Calu3 (cell line): ENCODE measurements at regions of chr10 and their contacts with region 1.

Region 1: DNA sequence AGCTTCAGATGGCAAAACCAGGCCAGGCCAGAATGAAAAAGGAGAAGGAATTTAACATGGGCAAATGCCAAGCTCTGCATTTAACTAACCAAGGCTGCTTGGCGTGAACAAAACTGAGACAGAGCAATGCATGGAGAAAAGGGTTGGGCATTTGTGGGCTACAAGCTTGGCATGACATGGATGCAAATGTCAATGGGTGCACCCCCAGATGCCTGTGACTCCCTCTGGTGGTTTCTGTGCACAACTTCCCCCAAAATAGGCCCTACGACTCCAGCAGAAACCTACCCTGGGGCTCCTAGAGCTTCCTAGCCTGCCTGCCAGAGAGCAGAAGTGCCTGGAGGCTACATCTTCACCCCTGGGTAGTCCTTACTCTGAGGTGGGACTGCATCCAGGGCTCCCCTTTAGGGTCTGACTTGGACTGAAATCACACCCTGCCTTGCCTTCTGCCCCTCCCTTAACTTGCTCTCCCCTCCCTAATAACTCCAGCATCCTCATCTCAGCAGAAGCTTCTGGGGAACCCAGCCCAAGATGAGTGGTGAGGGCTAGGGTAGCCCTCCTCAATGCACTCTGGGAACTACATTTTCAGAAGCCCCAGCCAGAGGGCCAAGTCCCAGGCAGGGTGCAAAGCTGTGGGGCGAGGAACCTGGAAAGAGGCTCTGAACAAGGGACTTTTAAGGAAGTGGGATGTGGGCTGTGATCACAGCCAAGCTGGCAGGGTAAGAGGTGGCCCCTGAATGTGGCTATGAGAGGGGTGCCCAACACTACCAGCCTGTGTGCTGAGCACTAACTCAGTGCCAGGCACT is 11.3 kb downstream of the GPRIN2 start:
- DNase-seq: peak; percentile 70
- H3K4me3 Mint-ChIP-seq: no peak overlapping the region
- H3K27ac Mint-ChIP-seq: no peak overlapping the region
- H3K4me1 Mint-ChIP-seq: peaks cover 37% of the 10 kb centered on the region
- H3K27me3 Mint-ChIP-seq: no peaks in the 10 kb centered on the region
- CTCF ChIP-seq: peak; percentile 89

Region 2: DNA sequence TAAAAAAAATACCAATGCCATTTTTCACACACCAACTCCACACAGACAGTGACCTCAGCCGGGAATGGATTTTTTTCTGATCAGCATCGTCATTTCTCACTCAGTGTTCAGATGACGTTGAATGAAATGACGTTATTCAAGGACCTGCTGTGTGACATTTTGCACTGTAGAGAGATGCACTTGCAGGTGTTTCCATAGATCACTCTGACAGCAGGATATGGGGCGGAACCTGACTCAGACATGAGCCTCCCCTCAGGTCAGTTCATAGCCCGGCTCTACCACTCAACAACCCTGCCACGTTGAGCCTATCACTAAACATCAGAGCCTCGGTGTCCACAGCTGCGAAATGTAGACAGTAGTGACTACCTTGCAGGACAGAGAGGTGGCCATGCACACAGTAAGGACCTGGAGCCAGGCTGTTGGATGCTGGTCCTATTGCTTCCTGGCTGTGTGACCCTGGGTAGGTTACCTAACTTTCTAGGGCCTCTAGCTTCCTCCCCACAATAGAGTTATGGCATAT is 299.7 kb before region 1 on chr10:
- CTCF ChIA-PET with region 1: no interaction called
- intact Hi-C with region 1: no loop called
- DNase-seq: no peak
- H3K4me3 Mint-ChIP-seq: no peak overlapping the region
- H3K27ac Mint-ChIP-seq: no peak overlapping the region
- H3K4me1 Mint-ChIP-seq: no peaks in the 10 kb centered on the region
- H3K27me3 Mint-ChIP-seq: peaks cover 76% of the 10 kb centered on the region
- CTCF ChIP-seq: no peak

Region 3: GRCh38 chr10:46255801-46256747 is 289.1 kb before region 1 on chr10:
- CTCF ChIA-PET with region 1: no interaction called
- intact Hi-C with region 1: no loop called
- DNase-seq: peak; percentile 98
- H3K4me3 Mint-ChIP-seq: no peak overlapping the region
- H3K27ac Mint-ChIP-seq: no peak overlapping the region
- H3K4me1 Mint-ChIP-seq: peaks cover 9% of the 10 kb centered on the region
- H3K27me3 Mint-ChIP-seq: peaks cover 72% of the 10 kb centered on the region
- CTCF ChIP-seq: peak; percentile 98

Region 4: GRCh38 chr10:46318799-46319198 is 226.4 kb before region 1 on chr10:
- CTCF ChIA-PET with region 1: no interaction called
- intact Hi-C with region 1: no loop called
- DNase-seq: no peak
- H3K4me3 Mint-ChIP-seq: no peak overlapping the region
- H3K27ac Mint-ChIP-seq: no peak overlapping the region
- H3K4me1 Mint-ChIP-seq: peaks cover 19% of the 10 kb centered on the region
- H3K27me3 Mint-ChIP-seq: no peaks in the 10 kb centered on the region
- CTCF ChIP-seq: no peak

Region 5: DNA sequence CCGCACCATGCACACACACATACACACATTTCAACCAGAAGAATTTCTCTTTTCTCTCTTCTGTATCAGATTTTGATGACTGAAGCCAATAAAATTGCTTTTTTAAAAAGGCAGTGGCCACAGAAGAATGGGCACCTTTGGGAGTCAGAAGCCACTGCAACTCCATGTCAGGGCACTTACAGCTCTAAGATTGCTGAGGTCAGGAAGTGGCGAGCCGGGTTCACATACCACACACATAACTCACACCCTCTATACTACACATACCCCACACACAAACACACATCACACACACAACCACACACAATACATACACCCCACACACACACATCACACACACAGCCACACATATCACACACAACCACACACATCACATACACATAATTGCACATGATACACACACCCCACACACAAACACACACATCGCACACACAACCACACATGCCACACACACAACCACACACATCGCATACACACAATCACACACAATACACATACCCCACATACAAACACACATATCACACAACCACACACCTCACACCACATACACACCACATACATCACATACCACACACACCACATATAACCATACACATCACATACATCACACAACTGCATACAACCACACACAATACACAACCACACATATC is 19.9 kb before region 1 on chr10:
- CTCF ChIA-PET with region 1: interaction called, 15 read pairs
- intact Hi-C with region 1: no loop called
- DNase-seq: peak; percentile 78
- H3K4me3 Mint-ChIP-seq: no peak overlapping the region
- H3K27ac Mint-ChIP-seq: no peak overlapping the region
- H3K4me1 Mint-ChIP-seq: no peaks in the 10 kb centered on the region
- H3K27me3 Mint-ChIP-seq: no peaks in the 10 kb centered on the region
- CTCF ChIP-seq: no peak

Region 6: DNA sequence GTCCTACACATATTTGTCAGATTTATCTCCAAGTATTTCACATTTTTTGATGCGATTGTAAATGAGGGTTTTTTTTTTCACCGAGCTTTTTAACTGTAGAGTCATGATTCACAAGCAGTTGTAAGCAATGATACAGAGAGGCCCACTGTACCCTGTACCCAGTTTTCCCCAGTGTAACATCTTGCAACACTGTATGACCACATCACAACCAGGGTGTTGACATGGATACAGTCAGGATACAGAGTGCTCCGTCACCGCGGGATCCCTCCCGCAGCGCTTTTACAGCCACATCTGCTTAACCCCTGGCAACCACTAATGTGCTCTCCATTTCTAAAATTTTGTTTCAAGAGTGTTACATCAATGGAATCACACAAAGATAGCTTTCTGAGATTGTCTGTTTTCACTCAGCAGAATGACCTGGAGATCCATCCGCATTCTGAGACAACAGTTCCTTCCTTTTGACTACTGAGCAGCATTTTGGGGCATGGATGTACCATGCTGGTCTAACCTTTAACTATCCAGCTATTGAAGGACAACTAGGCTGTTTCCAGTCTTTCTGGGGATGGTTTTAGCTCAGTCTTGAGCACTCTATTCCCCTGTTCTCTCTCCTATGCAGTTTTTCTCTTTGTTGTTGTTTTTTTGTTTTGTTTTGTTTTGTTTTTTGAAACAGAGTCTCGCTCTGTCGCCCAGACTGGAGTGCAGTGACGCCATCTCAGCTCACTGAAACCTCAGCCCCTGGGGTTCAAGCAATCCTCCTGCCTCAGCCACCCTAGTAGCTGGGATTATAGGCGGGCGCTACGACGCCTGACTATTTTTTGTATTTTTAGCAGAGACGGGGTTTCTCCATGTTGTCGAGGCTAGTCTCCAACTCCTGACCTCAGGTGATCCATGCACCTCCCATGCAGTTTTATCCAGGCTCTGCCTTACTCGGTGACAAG is 14.7 kb before region 1 on chr10:
- CTCF ChIA-PET with region 1: interaction called, 14 read pairs
- intact Hi-C with region 1: no loop called
- DNase-seq: no peak
- H3K4me3 Mint-ChIP-seq: no peak overlapping the region
- H3K27ac Mint-ChIP-seq: no peak overlapping the region
- H3K4me1 Mint-ChIP-seq: no peaks in the 10 kb centered on the region
- H3K27me3 Mint-ChIP-seq: no peaks in the 10 kb centered on the region
- CTCF ChIP-seq: no peak